ENCODE measurements at regions of chr13 and their contacts with region 1.

Region 1: DNA sequence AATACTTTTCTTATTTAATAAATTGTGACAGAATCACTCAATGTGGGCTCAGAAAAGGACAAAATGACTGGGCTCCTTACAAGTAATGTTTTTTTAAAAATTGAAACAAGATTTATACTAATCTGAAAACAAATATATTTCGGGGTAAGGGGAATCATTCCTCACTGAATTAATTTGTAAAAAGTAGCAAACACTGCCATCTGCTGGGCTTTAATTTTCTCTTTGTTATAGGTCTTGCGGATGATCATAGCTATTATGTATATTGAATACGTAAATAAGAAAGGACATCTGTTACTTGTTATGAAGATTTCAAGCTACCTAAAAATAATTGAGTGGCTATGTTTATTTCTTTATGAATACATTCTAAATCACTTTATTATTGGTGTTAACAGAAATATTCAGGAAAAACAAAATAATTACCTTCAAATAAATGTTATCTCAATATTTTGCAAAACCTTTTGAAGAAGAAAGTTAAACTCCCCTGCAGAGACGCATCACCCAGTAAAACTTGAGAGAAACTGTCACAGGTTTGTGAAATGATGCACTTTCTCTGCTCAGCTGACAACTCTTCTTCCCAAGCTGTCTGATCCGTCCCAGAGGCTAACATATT is 17.8 kb upstream of the ENOX1 start:
- DNase-seq: no peak
- H3K4me3 ChIP-seq: no peak overlapping the region
- CTCF ChIP-seq: no peak
- POLR2A ChIP-seq: no peak

Region 2: DNA sequence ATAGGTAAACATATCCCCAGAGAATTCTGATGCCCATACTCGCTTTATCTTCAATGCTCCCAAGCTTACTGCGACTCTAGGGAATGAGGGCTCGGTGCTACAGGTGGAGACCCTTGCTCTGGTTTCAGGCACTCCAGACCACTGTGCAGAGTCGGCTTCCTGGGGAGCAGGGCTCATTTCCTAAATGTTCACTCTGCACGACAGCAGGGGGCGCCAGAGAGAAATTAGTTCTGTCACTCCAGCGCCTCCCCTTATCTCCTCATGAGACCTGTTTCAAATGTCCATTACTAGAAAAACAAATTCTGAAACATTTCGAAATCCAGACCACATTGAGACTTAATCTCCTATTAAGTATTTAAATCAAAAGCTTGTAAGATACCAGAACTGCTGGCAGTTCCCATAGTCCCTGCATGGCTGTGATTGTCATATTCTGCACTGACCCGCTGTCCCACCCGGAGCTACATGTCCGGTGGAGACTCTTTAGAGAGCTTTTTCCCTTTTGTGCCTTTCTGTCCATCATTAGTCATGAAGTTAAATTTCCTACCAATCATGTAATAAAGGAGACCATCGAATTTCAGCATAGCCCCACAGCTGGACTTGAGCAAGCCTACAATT is 834.9 kb before region 1 on chr13:
- intact Hi-C with region 1: loop called (anchors 5 kb)
- DNase-seq: peak; percentile 64 to 95
- H3K4me3 ChIP-seq: no peak overlapping the region
- CTCF ChIP-seq: no peak
- POLR2A ChIP-seq: no peak

Region 3: GRCh38 chr13:43094901-43095300 is 709.7 kb before region 1 on chr13:
- intact Hi-C with region 1: loop called (anchors 5 kb)
- DNase-seq: no peak
- H3K4me3 ChIP-seq: no peak overlapping the region
- CTCF ChIP-seq: no peak
- POLR2A ChIP-seq: no peak

Region 4: DNA sequence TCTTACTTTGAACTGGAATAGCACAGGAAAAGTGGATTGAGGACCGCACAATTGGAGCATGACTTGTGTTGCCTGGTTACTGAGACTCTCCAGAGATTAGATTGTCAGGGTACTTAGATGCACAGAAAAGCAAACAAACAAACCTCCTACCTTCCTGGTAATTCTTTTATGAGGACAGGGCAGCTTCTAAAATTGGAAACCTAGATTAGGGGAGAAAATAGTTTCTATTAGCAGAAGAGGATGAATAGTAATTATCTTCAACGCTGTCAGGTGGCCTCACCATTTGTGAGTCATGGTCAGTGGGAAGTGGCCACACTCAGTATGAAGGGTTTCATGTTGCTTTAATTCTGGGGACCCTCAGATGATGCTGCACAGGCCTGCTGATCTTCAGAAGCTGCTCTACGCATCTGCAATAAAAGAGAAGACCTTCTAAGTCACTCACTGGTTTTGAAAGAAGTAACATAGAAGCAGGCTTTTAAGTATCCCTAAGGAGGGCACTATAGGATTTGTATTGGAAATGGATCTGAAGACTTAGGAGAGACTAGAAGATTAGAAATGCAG is 181.9 kb after region 1 on chr13:
- intact Hi-C with region 1: no loop called
- DNase-seq: no peak
- H3K4me3 ChIP-seq: no peak overlapping the region
- CTCF ChIP-seq: no peak
- POLR2A ChIP-seq: no peak

Region 5: DNA sequence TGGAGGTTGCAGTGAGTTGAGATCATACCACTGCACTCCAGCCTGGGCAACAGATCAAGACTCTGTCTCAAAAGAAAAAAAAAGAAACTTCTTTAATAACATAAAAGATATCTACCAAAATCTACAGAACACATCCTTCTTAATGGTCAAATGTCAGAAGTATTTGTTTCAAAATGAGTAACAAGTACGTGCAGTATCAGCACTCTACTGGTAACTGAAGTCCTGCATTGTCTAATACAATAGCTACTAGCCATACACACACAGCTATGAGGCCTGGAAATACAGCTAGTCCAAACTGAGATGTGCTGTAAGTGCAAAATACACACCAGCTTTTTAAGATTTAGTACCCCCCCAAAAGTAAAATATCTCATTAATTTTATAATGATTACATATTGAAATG is 683.4 kb after region 1 on chr13:
- intact Hi-C with region 1: no loop called
- DNase-seq: no peak
- H3K4me3 ChIP-seq: no peak overlapping the region
- CTCF ChIP-seq: no peak
- POLR2A ChIP-seq: no peak